Common myeloid progenitor, CD34-positive (primary cell): ENCODE measurements at regions of chr1 and their contacts with region 1.

Region 1: DNA sequence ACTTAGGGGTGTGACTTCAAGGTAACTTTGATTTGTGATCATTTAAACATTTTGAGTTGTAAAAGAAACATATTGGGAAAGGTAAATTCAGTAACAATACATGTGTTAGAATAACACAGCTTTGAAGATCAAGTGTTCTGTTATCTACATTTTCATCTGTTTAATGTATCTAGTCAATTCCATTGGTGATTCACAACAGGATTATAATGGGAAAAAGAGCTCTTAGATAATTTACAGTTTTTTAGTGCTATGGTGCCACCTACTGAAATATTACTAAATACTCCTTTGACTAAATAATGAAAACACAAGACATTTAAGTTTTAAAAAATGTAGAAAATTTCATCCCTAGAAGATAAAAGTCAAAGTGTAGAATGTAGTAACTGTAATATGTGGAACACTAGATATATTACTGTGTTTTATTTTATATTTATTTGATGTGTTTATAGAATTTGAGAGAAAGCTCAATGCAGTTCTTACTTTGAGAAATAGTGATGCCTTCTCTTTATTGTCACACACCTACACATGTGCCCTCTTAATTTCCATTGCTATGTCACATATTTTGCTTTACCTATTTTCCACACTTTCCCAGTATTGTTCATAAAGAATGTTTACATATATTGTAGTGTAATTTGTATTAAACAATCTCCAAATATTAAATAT is 47.4 kb downstream of the PTPRC start:
- DNase-seq: peak; percentile 36 to 59 (median 44)
- H3K4me3 ChIP-seq: peak overlapping the region in 1 of 7 experiments; percentile 35
- H3K27ac ChIP-seq: peak overlapping the region in 1 of 2 experiments; percentile 95
- H3K4me1 ChIP-seq: peaks cover 35 to 66% (median 50%) of the 10 kb centered on the region in 4 experiments
- H3K27me3 ChIP-seq: no peaks in the 10 kb centered on the region

Region 2: GRCh38 chr1:198423673-198424072 is 262.5 kb before region 1 on chr1:
- CTCF ChIA-PET with region 1: no interaction called
- POLR2A ChIA-PET with region 1: no interaction called
- DNase-seq: no peak
- H3K4me3 ChIP-seq: no peak overlapping the region
- H3K27ac ChIP-seq: no peak overlapping the region
- H3K4me1 ChIP-seq: no peaks in the 10 kb centered on the region
- H3K27me3 ChIP-seq: no peaks in the 10 kb centered on the region

Region 3: DNA sequence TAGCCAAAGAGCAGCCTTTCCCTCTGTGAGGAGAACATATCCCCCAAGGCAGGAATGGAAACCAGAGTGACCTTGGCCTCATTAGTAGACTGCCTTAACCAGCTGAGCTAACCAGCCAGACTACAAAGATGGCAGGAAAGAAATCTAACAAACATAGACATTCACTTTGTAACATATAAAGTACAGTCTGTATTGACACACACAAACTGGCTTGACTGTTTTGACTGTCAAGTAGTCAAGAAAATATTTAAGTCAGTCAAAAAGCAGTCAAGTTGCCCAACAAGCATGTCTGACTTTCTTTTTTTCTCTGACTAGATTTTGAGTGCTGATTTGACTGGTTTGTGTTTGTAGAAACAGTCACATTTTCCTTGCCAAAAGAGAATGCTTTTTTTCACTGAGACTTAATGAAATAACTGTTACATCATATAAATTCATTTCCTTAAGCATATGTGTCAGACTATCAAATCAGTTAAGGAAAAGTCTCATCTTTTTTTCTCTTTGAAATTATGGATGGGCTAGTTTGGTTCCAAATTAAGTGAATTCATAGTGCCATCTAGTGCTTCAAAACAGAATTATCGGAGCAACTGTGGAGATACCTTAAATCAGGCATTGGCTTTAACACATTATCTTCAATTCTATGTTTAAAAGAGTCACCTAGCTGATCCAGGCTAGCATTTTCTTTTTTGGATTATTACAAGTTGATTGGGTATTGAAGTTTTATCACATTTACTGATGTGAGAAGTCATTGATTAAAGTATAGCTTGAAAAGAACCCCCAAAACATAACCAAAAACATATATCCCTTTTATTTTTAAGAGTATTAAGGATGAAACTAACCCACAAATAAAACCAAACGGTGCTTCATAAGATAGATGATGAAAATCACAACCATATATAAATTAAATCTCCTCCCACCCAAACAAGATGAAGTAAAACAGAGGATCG is 220.7 kb before region 1 on chr1:
- CTCF ChIA-PET with region 1: interaction called, 11 read pairs
- POLR2A ChIA-PET with region 1: no interaction called
- DNase-seq: peak; percentile 50 to 67 (median 62)
- H3K4me3 ChIP-seq: no peak overlapping the region
- H3K27ac ChIP-seq: no peak overlapping the region
- H3K4me1 ChIP-seq: peaks cover 0 to 11% (median 2%) of the 10 kb centered on the region in 4 experiments
- H3K27me3 ChIP-seq: no peaks in the 10 kb centered on the region

Region 4: GRCh38 chr1:198497346-198498102 is 188.7 kb before region 1 on chr1:
- CTCF ChIA-PET with region 1: no interaction called
- POLR2A ChIA-PET with region 1: no interaction called
- DNase-seq: no peak
- H3K4me3 ChIP-seq: no peak overlapping the region
- H3K27ac ChIP-seq: no peak overlapping the region
- H3K4me1 ChIP-seq: no peaks in the 10 kb centered on the region
- H3K27me3 ChIP-seq: no peaks in the 10 kb centered on the region

Region 5: GRCh38 chr1:198653808-198654413 is 32.3 kb before region 1 on chr1:
- CTCF ChIA-PET with region 1: no interaction called
- POLR2A ChIA-PET with region 1: no interaction called
- DNase-seq: no peak
- H3K4me3 ChIP-seq: no peak overlapping the region
- H3K27ac ChIP-seq: peak overlapping the region in 1 of 2 experiments; percentile 83
- H3K4me1 ChIP-seq: peaks cover 38 to 94% (median 59%) of the 10 kb centered on the region in 4 experiments
- H3K27me3 ChIP-seq: no peaks in the 10 kb centered on the region

Region 6: DNA sequence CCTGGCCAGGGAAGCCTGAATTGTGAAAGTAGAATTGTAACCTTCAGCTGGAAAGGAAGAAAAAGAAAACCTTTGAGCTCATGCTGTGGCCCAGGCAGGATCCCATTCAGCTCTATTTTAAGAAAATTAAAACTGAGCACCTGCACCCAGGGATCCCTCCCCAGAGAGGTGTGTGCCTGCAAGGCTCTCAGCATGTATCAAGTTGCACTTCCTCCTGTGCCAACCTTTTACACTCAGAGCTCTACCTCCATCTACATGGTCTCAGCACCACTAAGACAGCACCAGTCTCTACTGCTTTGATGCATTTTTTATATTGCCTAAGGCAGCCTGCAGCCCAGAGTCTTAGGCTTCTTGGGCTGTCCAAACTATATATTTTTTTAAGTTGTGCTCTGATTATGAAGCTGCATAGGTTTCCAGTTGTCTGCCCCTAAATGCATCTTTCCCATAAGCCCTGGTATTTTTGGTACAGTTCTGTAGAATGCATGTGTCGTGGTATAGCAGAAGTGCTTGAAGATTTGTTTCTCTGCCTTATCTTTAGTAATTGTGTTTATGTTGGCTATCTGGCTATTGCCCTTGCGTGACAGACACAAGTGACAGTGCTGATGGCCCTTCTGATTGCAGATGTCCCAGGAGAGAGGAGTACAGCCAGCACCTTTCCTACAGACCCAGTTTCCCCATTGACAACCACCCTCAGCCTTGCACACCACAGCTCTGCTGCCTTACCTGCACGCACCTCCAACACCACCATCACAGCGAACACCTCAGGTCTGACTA is 15.8 kb after region 1 on chr1:
- CTCF ChIA-PET with region 1: interaction called, 16 read pairs
- POLR2A ChIA-PET with region 1: no interaction called
- DNase-seq: no peak
- H3K4me3 ChIP-seq: no peak overlapping the region
- H3K27ac ChIP-seq: no peak overlapping the region
- H3K4me1 ChIP-seq: no peaks in the 10 kb centered on the region
- H3K27me3 ChIP-seq: no peaks in the 10 kb centered on the region

Region 7: DNA sequence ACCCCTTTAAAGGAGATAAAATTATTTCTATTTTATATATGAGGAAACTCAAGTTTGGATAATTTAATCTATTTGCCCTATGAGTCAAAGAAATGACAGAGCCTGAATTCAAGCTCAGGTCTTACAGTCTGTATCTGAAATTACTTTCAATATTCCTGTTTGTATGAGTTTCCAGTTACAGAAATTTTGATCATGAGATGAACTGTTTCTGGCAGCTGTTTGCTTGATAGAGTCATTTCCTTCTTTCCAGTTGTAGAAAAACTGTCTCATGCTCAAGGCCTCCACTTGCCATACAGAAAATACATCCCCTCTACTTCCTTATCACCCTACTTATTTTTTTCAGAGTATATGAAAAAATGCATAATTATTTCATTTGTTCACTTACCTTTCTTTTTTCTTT is 40.3 kb after region 1 on chr1:
- CTCF ChIA-PET with region 1: no interaction called
- POLR2A ChIA-PET with region 1: no interaction called
- DNase-seq: peak in 2 of 3 donors; percentile 43 to 60
- H3K4me3 ChIP-seq: no peak overlapping the region
- H3K27ac ChIP-seq: no peak overlapping the region
- H3K4me1 ChIP-seq: peaks cover 0 to 14% (median 6%) of the 10 kb centered on the region in 4 experiments
- H3K27me3 ChIP-seq: no peaks in the 10 kb centered on the region